ENCODE measurements at regions of chr20 and their contacts with region 1.

Region 1: DNA sequence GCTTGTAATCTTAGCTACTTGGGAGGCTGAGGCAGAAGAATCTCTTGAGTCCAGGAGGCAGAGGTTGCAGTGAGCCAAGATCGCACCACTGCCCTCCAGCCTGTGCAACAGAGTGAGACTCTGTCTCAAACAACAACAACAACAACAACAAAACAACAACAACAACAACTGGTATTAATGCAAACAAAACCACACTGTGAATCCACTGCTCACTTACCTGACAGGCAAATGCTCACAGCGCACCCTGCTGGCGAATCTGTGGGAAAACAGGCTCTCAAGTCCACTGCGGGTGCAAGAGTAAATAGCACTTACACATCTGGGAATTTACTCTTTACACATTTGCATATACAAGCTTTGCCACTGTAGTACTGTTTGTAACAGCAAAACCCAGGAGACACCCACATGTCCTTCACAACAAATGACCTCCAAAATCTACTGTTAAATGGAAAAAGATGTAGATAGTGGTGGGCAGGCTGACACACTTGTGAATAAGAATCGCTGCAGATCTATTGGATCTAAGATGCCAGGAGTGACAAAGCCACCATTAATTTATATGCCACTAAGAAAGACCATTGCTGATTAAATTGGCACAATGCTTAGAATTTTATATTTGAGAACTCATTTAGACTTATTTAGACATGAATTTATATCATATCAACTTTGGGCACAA is 29.3 kb downstream of the NSFL1C start:
- DNase-seq: peak; percentile 78
- ATAC-seq: peak; percentile 84
- H3K4me3 ChIP-seq: no peak overlapping the region
- H3K27ac ChIP-seq: peak overlapping the region; percentile 69
- H3K4me1 ChIP-seq: peaks cover 10% of the 10 kb centered on the region
- H3K27me3 ChIP-seq: no peaks in the 10 kb centered on the region
- CTCF ChIP-seq: peak; percentile 95

Region 2: GRCh38 chr20:1225263-1225782 is 212.0 kb before region 1 on chr20:
- CTCF ChIA-PET with region 1: interaction called, 10 read pairs
- POLR2A ChIA-PET with region 1: no interaction called
- in situ Hi-C with region 1: no loop called
- intact Hi-C with region 1: no loop called
- DNase-seq: no peak
- ATAC-seq: peak; percentile 88
- H3K4me3 ChIP-seq: peak overlapping the region; percentile 49 to 60
- H3K27ac ChIP-seq: no peak overlapping the region
- H3K4me1 ChIP-seq: peaks cover 6% of the 10 kb centered on the region; the same call in 1 of the 2 replicates
- H3K27me3 ChIP-seq: peaks cover 3% of the 10 kb centered on the region; the same call in 1 of the 2 replicates
- CTCF ChIP-seq: no peak

Region 3: DNA sequence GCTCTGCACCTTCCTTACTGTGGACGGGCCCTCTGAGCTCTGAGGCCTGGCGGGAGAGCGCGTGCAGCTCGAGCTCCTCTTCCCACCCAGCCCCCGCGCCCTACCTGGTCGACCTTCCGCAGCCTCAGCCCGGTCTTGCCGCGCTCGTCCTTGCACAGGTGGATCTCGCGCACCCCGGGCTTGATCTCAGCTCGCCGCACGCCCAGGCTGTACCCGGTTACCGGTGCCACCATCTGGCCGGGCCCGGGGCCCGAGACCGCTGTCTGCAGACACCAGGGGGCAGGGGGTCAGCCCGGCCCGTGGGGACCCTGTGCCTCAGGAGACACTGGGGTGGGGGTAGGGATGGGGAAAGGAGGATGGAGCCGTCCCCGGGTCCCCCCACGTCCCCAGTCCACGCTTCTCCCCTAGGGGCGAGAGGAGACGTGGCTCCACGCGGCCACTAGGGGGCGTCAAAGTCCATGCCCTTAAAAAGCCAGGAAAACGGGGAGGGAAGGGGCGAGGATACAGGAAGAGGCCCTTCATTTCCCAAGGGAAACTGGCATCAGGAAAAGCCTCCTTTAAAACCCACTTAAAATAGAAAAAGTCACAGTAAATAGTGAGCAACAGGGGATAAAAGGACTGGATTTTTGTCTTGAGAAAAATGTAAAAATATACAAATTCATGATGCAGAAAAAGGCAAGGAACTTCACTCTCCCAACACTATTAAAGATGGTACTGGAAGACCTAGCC is 124.0 kb before region 1 on chr20:
- CTCF ChIA-PET with region 1: interaction called, 3 read pairs
- POLR2A ChIA-PET with region 1: no interaction called
- in situ Hi-C with region 1: no loop called
- intact Hi-C with region 1: loop called (anchors 1 kb)
- DNase-seq: peak; percentile 35
- ATAC-seq: peak; percentile 81
- H3K4me3 ChIP-seq: no peak overlapping the region
- H3K27ac ChIP-seq: peak overlapping the region; percentile 11; the same call in 1 of the 2 replicates
- H3K4me1 ChIP-seq: peaks cover 9% of the 10 kb centered on the region; the same call in 1 of the 2 replicates
- H3K27me3 ChIP-seq: no peaks in the 10 kb centered on the region
- CTCF ChIP-seq: peak; percentile 95

Region 4: GRCh38 chr20:1325173-1326030 is 112.0 kb before region 1 on chr20:
- CTCF ChIA-PET with region 1: no interaction called
- POLR2A ChIA-PET with region 1: no interaction called
- in situ Hi-C with region 1: no loop called
- intact Hi-C with region 1: no loop called
- DNase-seq: peak; percentile 80
- ATAC-seq: peak; percentile 94
- H3K4me3 ChIP-seq: peak overlapping the region; percentile 91 to 96
- H3K27ac ChIP-seq: peak overlapping the region; percentile 96
- H3K4me1 ChIP-seq: peaks cover 41% of the 10 kb centered on the region
- H3K27me3 ChIP-seq: no peaks in the 10 kb centered on the region
- CTCF ChIP-seq: no peak

Region 5: DNA sequence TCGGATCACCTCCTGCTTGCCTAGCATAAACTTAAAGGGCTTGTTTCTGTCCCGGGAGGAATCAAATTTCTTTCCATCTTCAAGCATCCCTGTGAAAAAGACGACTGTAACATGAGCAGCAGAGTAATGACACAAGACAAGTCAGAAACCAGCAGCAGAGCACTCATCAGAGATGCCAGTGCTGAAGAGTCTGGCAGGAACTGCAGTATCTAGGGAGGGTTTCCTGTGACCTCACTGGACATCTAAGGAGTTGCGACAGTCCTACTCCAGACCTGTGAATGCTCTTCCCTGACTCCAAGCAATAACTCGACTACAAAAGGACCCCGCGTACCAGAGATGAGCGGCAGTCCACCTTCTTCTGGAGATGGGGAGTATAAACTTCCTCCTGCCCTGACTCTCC is 61.9 kb before region 1 on chr20:
- CTCF ChIA-PET with region 1: no interaction called
- POLR2A ChIA-PET with region 1: no interaction called
- in situ Hi-C with region 1: no loop called
- intact Hi-C with region 1: loop called (anchors 10 kb)
- DNase-seq: no peak
- ATAC-seq: no peak
- H3K4me3 ChIP-seq: no peak overlapping the region
- H3K27ac ChIP-seq: peak overlapping the region; percentile 21; the same call in 1 of the 2 replicates
- H3K4me1 ChIP-seq: peaks cover 71% of the 10 kb centered on the region
- H3K27me3 ChIP-seq: no peaks in the 10 kb centered on the region
- CTCF ChIP-seq: no peak

Region 6: DNA sequence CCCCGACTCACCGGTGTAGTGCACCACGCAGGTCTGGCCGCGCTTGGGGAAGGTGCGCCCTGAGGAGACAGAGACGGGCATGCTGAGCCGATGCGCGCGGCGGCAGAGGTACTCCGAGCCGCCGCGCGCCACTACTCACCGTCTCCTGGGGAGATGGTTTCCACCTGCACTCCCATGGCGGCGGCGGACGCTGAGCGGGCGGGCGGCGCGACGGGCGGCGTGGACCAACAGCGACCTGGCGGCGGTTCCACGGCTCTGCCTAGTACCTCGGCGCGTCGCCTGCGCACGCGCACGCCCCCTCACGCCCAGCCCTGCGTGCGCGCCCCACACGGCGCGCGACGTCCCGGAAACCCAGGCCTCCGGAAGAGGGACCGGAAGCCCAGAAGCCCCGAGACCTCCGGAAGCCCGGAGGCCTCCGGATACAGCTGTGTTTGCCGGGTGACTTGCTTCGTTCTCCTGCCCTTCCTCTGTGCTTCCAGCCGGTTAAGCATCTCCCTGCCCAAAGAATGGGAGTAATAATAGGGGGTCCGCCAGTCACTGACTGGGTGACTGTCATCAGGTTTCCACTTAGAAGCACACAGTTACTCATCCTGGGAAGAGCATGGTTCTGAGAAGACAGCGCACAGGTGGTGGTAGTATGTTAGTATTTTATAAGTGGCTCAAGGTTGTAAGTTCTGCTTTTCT is 44.4 kb before region 1 on chr20 and contains the start of gene FKBP1A:
- CTCF ChIA-PET with region 1: interaction called, 3 read pairs
- POLR2A ChIA-PET with region 1: interaction called, 3 read pairs
- in situ Hi-C with region 1: no loop called
- intact Hi-C with region 1: loop called (anchors 5 kb)
- DNase-seq: peak; percentile 75
- ATAC-seq: peak; percentile 96
- H3K4me3 ChIP-seq: peak within 1 kb of the TSS; percentile 75 to 92
- H3K27ac ChIP-seq: peak within 1 kb of the TSS; percentile 97
- H3K4me1 ChIP-seq: peaks cover 35% of the 10 kb centered on the region
- H3K27me3 ChIP-seq: no peaks in the 10 kb centered on the region
- CTCF ChIP-seq: no peak
- total RNA-seq, gene FKBP1A: 695 TPM